GM10248 (cell line): ENCODE measurements at regions of chr14 and their contacts with region 1.

Region 1: GRCh38 chr14:68718023-68718995 is 74.6 kb downstream of the ZFP36L1 start:
- DNase-seq: no peak
- CTCF ChIP-seq: no peak

Region 2: GRCh38 chr14:68563246-68564131 is 154.8 kb before region 1 on chr14:
- CTCF ChIA-PET with region 1: no interaction called
- POLR2A ChIA-PET with region 1: no interaction called
- DNase-seq: no peak
- CTCF ChIP-seq: no peak

Region 3: DNA sequence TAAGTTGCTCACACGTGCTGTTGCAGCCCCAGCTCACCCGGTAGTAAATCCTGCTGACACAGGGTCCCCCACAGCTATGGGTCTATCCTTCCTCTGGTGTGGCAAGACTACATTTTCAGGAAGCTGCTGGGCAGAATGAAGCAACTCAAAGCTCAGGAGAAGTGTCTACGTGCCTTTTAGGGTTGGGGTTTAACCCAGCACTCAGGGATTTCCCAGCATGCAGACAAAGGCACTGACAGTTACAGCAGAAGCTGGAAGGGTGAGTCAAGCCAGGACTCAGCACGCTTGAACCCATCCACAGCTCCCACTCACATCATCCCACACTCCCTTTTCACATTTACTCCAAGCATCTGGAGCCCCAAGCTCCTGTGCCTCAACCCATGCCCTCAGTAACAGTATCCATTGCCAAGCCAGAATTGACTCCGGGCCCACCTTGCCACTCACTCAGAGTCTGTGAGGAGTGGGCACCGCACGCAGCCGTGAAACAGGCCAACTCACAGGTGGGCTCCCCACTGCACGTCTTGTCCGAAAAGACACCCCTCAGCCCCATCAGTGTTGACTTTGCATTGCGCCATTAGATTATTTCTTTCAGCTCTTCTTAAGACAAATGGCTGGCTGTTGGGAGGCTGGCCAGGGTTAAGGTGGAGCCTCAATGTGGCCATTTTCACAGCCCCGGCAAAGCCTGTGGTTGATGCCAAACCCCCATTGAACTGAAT is 14.9 kb after region 1 on chr14:
- CTCF ChIA-PET with region 1: interaction called, 35 read pairs
- POLR2A ChIA-PET with region 1: no interaction called
- DNase-seq: peak; percentile 66
- CTCF ChIP-seq: no peak

Region 4: GRCh38 chr14:68824517-68825347 is 106.4 kb after region 1 on chr14:
- CTCF ChIA-PET with region 1: no interaction called
- POLR2A ChIA-PET with region 1: no interaction called
- DNase-seq: peak; percentile 58
- CTCF ChIP-seq: peak; percentile 91